Activated naive CD4-positive, alpha-beta T cell treated with anti-CD3 and anti-CD28 coated beads for 36 hours (primary cell): ENCODE measurements at regions of chr6 and their contacts with region 1.

Region 1: GRCh38 chr6:35327349-35328027 is 14.9 kb upstream of the PPARD start:
- DNase-seq: peak; percentile 91
- H3K4me3 Mint-ChIP-seq: no peak overlapping the region
- H3K27ac Mint-ChIP-seq: peak overlapping the region; percentile 70
- H3K4me1 Mint-ChIP-seq: peaks cover 19% of the 10 kb centered on the region
- H3K27me3 Mint-ChIP-seq: no peaks in the 10 kb centered on the region

Region 2: DNA sequence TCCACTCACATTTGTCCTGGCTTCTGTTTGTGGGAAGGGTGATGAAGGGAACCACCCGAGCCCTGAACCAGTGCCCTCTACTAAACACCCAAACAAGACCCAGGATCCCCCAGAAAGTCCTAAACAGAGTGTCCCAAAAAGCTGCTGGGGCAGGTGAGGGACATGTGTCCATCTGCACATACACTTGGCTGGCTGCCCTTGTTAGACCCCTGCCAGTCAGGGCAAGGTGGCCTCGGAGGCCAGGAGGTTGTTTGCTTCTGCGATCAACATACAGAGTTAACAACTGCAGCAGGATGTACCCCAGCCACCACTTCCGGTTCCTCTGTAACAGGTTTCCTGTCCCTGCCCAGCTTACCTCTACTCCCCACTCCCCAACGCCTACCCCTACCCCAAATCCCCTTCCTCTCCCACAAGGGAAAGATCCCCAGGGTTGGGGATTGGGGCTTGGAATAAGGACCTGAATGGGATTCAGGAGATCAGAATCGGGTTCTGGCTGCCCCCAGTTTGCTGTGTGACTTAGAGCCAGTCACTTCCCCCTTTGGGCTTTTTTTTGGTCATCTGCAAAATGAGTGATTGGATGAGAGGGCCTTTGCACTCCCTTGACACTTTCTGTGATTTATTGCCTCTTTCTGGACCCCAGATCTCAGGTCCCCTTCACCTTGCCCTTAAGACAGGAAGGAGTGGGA is 16.0 kb before region 1 on chr6:
- CTCF ChIA-PET with region 1: interaction called, 12 read pairs
- intact Hi-C with region 1: loop called (anchors 2 kb)
- DNase-seq: peak; percentile 71
- H3K4me3 Mint-ChIP-seq: peak overlapping the region; percentile 61
- H3K27ac Mint-ChIP-seq: peak overlapping the region; percentile 95
- H3K4me1 Mint-ChIP-seq: peaks cover 85% of the 10 kb centered on the region
- H3K27me3 Mint-ChIP-seq: no peaks in the 10 kb centered on the region